Calu3 (cell line): ENCODE measurements at regions of chr4 and their contacts with region 1.

Region 1: DNA sequence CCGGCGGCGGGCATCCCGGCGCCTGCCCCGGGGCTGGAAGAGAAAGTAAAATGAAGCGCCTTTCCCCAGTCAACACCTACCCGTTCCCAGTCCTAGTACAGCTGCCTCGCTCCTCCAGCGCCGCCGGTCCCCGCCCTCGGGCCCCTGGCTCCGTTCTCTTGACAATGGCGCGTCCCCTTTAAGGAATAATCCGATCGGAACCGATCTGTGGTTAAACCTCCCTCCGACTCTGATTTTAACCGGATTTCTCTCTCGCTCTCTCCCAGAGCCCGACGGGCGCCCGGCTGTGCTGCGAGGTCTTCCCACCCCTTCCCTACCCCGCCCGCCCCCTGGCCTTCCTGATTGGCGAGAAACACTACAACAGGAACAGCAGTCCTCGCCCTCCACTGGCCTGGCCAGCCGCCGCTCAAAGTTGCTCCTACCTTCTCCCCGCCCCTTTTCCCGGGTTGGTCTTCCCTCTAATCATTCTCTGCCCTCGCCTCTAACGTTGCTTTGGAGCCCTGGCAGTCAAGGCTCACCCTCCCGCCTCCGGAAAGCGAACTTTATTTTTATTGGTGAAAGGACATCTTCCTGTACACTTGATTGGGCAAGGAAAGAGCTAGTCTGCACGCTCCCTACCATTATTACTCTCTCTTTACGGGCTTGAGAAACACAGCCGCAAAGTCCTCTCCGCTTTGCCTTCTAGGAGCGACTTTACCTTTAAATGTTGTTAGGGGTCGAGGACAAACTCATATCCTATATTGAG is at the start of gene FRYL:
- DNase-seq: peak; percentile 96
- H3K4me3 Mint-ChIP-seq: peak within 1 kb of the TSS; percentile 93
- H3K27ac Mint-ChIP-seq: peak within 1 kb of the TSS; percentile 87
- H3K4me1 Mint-ChIP-seq: peaks cover 8% of the 10 kb centered on the region
- H3K27me3 Mint-ChIP-seq: no peaks in the 10 kb centered on the region
- CTCF ChIP-seq: no peak
- total RNA-seq, gene FRYL: 45.8 and 52.5 TPM in 2 replicates

Region 2: DNA sequence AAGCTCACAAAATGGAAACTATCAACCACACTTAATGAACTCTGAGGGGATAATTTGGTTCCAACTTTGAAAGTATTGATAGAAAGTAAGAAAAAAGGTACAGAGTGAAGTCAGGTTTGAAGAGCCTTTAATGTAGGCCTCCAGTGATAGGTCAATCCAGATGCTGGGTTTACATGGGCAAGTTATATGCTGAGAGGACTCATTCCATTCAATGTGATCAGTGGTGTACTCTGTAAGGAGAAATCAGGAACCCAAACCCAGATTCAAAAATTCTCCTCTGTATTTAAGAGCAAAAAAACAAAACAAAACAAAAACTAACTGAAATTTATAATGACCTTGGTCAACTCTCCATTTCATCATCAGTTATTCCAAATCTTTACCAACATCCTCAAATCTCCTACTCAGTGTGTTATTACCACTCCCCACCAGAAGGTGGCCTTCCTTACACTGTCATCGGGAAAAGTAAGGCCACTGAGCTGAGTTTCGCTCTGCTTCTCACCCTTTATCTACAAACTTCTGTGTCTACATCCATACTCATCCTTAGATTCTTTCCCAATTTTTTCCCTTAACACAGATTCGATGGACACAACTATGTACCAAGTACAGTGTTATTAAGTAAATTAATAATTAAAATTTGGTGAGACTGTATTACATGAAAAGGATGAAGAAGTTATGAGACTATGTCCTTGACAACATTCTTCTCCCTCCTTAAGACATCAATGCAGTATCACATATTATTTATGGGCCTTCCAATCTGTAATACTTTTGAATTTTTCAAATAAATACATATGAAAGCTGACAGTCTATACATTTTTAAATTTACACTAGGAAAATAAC is 201.8 kb before region 1 on chr4:
- CTCF ChIA-PET with region 1: interaction called, 8 read pairs
- intact Hi-C with region 1: loop called (anchors 5 kb)
- DNase-seq: peak; percentile 53
- H3K4me3 Mint-ChIP-seq: no peak overlapping the region
- H3K27ac Mint-ChIP-seq: no peak overlapping the region
- H3K4me1 Mint-ChIP-seq: no peaks in the 10 kb centered on the region
- H3K27me3 Mint-ChIP-seq: no peaks in the 10 kb centered on the region
- CTCF ChIP-seq: peak; percentile 32

Region 3: GRCh38 chr4:48602222-48602621 is 177.9 kb before region 1 on chr4:
- CTCF ChIA-PET with region 1: no interaction called
- intact Hi-C with region 1: loop called (anchors 2 kb)
- DNase-seq: peak; percentile 1
- H3K4me3 Mint-ChIP-seq: no peak overlapping the region
- H3K27ac Mint-ChIP-seq: peak overlapping the region; percentile 69
- H3K4me1 Mint-ChIP-seq: peaks cover 19% of the 10 kb centered on the region
- H3K27me3 Mint-ChIP-seq: no peaks in the 10 kb centered on the region
- CTCF ChIP-seq: no peak

Region 4: DNA sequence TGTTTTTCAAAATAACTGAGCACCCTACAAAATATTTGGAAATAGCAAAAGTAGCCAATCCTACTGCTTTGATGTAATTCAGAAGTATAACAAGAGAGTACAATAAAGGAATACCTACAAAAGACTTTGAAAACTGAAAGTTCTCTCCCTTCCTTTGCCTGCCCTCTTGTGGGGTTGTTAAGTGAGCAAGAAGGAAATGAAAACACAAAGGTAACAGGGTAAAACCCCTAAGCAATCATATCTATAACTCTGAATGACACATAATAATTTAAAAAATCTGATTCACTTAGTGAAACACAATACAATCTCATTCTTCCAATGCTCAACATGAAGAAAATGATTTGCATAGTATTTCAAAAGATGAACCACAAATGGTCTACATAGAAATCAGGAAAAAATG is 98.3 kb before region 1 on chr4:
- CTCF ChIA-PET with region 1: no interaction called
- intact Hi-C with region 1: loop called (anchors 5 kb)
- DNase-seq: peak; percentile 28
- H3K4me3 Mint-ChIP-seq: no peak overlapping the region
- H3K27ac Mint-ChIP-seq: peak overlapping the region; percentile 87
- H3K4me1 Mint-ChIP-seq: peaks cover 9% of the 10 kb centered on the region
- H3K27me3 Mint-ChIP-seq: no peaks in the 10 kb centered on the region
- CTCF ChIP-seq: peak; percentile 23

Region 5: DNA sequence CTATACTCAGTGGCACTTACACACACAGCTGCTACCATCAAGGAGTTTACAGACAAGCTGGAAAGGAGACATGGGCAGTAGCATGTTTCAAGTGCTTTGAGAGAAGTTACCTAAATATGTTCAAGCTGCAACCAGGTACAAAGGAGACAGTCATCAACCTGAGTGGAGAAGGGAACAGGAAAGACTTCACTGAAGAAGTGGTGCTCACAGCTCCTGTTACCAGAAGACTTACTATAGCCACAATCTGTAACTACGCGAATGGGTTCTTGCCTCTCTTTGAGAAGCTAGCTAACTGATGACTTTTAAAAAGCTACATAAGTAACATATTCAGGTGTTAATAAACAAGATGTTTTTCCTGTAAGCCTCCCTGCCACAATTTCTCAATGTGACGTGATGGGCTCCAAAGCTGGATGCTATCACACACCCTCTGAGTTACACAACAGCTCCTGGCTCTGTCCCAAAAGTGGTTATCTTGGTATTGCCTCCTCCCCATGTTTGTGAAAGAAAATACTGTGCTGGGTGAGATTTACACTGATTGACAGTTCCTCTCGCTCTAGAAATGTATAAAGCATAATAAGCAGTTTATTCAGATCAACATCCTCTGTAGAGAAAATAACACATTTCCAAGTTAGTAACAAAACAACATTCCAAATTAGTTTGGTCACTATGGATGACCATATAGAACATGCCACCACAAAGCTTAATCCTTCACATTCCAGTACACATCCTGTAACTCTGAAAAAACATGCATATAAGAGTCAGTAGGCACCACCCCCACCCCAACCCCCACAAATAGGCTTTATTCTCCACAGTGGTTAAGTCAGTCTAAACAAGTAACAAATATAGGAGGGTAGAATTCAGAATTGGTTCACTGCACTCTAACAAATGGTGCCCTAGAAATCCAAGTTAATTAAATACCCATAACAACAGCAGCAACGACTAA is 81.9 kb before region 1 on chr4:
- CTCF ChIA-PET with region 1: interaction called, 6 read pairs
- intact Hi-C with region 1: loop called (anchors 2 kb)
- DNase-seq: peak; percentile 75
- H3K4me3 Mint-ChIP-seq: peak overlapping the region; percentile 19
- H3K27ac Mint-ChIP-seq: peak overlapping the region; percentile 86
- H3K4me1 Mint-ChIP-seq: peaks cover 35% of the 10 kb centered on the region
- H3K27me3 Mint-ChIP-seq: no peaks in the 10 kb centered on the region
- CTCF ChIP-seq: no peak

Region 6: DNA sequence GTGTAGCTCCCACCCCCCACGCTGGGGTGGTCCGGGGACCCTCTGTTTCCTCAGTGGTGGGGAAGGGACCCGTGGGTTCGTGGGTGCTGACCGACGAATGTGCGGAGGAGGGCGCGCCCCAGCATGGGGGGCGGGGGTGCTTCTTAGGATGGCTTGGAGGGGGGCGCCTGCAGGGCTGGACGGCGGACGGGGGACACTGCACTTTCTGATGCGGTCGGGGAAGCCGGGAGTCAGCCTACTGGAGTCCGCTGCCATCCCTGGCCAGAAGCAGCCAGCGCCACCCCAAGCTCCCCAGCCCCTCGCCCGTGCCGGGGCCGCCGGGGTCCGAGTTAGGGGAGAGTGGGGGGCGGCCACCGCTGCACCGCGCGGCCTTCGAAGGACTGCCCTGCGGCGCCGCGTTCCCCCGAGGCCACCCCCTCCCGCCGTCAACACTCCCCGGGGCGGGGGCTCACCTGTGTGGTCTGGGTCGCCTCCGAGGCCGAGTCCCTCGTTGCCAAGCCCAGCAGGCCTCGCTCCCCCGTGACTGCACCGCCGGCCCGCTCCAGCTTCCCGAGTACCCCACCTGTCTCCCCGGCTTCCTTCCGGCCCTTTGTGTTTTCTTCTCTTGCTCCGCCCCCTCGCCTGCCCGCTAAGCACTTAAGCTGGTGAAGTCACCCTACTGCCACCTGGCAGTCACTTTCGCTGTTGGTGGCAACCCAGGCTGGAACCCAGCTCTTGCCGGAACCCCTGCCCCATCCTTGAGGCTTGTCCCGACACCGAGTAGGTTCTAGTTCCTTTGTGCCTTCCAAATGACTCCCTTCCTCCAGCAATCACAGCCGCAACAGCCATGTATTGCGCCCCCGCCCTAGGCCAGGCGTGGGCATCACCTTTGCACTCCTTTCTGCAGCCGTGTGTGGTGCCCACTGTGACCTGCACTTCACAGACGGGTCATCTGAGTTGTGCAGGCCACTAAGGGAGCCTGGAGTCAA is 126.3 kb after region 1 on chr4 and contains the start of gene OCIAD2:
- CTCF ChIA-PET with region 1: no interaction called
- intact Hi-C with region 1: loop called (anchors 5 kb)
- DNase-seq: peak; percentile 80
- H3K4me3 Mint-ChIP-seq: peak within 1 kb of the TSS; percentile 96
- H3K27ac Mint-ChIP-seq: peak within 1 kb of the TSS; percentile 97
- H3K4me1 Mint-ChIP-seq: peaks cover 36% of the 10 kb centered on the region
- H3K27me3 Mint-ChIP-seq: no peaks in the 10 kb centered on the region
- CTCF ChIP-seq: no peak
- total RNA-seq, gene OCIAD2: 141 and 182 TPM in 2 replicates

Region 7: DNA sequence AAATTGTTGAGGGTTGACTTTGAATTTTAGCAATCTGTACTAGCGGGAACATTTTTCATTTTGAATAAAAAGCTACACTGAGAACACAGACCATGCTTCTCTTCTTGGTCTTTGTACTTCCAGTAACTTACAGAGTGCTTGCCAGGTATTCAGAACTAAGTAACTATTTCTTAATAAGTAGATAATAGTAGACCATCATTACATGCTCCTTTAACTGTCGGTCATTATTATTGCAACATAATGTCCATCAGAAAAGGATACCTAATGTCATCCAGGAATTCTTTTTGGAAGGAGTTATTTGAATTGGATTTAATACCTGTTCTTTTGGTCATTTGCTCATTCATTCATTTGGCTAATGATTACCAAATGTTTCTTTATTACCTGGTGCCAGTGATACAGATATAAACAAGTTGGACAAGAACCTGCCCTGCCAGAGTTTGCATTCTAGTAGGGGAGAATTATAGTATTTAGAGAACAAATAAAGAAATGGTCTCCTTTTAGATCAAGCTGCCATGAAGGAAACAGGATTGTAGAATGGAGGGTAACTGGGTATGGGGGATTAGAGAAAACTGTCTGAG is 238.6 kb after region 1 on chr4:
- CTCF ChIA-PET with region 1: no interaction called
- intact Hi-C with region 1: no loop called
- DNase-seq: no peak
- H3K4me3 Mint-ChIP-seq: no peak overlapping the region
- H3K27ac Mint-ChIP-seq: no peak overlapping the region
- H3K4me1 Mint-ChIP-seq: no peaks in the 10 kb centered on the region
- H3K27me3 Mint-ChIP-seq: peaks cover 14% of the 10 kb centered on the region
- CTCF ChIP-seq: no peak